ENCODE measurements at regions of chr1 and their contacts with region 1.

Region 1: GRCh38 chr1:2412519-2413233 is at the start of gene PEX10:
- DNase-seq: peak; percentile 90 to 98
- H3K4me3 ChIP-seq: peak within 1 kb of the TSS; percentile 87 to 98
- H3K27ac ChIP-seq: peak within 1 kb of the TSS; percentile 79
- H3K4me1 ChIP-seq: peaks cover 12 to 26% of the 10 kb centered on the region in 2 donors
- H3K27me3 ChIP-seq: peaks cover 6% of the 10 kb centered on the region
- CTCF ChIP-seq: no peak
- total RNA-seq, gene PEX10: 26.1 TPM

Region 2: GRCh38 chr1:2360588-2361364 is 51.9 kb before region 1 on chr1:
- intact Hi-C with region 1: no loop called
- DNase-seq: no peak
- H3K4me3 ChIP-seq: no peak overlapping the region
- H3K27ac ChIP-seq: peak overlapping the region in 1 of 2 donors; percentile 42
- H3K4me1 ChIP-seq: peaks cover 0 to 5% of the 10 kb centered on the region in 2 donors
- H3K27me3 ChIP-seq: no peaks in the 10 kb centered on the region
- CTCF ChIP-seq: no peak

Region 3: DNA sequence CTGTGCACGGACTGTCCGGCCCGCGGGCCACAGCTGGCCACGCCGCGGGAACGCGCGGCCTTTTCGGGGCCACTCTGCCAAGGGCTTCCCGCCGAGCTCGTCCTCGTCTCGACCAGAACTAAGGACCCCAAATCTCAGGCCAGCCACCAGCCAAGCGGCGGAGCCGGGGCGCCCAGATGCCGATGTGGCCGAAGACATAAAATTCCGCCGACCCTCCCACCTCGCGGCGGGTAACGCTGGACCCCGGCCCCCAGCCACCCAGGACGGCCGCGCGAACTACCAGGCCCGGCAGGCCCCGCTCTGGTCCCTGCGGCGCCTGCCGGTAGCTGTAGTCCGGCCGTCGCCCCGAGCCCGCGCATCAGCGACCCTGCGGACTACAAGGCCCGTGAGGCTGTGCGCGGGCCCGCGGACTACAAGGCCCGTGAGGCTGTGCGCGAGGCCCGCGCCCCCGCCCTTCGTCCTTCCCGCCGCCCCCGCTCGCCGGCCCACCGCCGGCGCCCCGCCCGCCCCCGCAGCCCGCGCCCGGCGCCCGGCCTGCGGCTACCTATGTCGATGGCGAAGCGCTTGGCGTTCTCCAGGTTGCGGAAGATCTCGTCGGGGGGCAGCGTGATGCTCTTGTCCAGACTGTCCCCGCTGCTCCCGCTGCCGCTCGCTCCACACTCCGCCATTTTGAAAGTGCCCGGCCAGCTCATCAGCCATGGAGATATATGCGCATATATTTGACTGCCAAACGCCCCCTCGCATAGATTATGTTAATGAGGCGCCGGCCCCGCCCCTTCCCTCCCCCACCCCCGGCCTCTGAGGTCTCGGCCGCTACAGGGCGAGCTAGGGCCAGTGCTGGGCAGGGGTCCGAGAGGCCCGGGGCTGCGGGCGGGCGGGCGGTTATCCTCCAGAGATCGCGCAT is 113.5 kb after region 1 on chr1 and contains the start of gene PANK4:
- intact Hi-C with region 1: loop called (anchors 1 kb)
- DNase-seq: peak; percentile 68 to 96
- H3K4me3 ChIP-seq: peak within 1 kb of the TSS; percentile 75 to 80
- H3K27ac ChIP-seq: peak within 1 kb of the TSS; percentile 66 to 68
- H3K4me1 ChIP-seq: peaks cover 36 to 54% of the 10 kb centered on the region in 2 donors
- H3K27me3 ChIP-seq: no peaks in the 10 kb centered on the region
- CTCF ChIP-seq: no peak
- total RNA-seq, gene PANK4: 80.5 TPM

Region 4: GRCh38 chr1:2586154-2587070 is 173.7 kb after region 1 on chr1 and contains the start of gene PRXL2B:
- intact Hi-C with region 1: loop called (anchors 1 kb)
- DNase-seq: peak; percentile 95 to 99
- H3K4me3 ChIP-seq: peak within 1 kb of the TSS; percentile 79 to 85
- H3K27ac ChIP-seq: peak within 1 kb of the TSS; percentile 91 to 94
- H3K4me1 ChIP-seq: peaks cover 13 to 14% of the 10 kb centered on the region in 2 donors
- H3K27me3 ChIP-seq: no peaks in the 10 kb centered on the region
- CTCF ChIP-seq: no peak
- total RNA-seq, gene PRXL2B: 20.1 TPM

Region 5: GRCh38 chr1:2786329-2787162 is 373.9 kb after region 1 on chr1:
- intact Hi-C with region 1: loop called (anchors 2 kb)
- DNase-seq: peak in 1 of 2 donors; percentile 67
- H3K4me3 ChIP-seq: no peak overlapping the region
- H3K27ac ChIP-seq: no peak overlapping the region
- H3K4me1 ChIP-seq: no peaks in the 10 kb centered on the region
- H3K27me3 ChIP-seq: peaks cover 9% of the 10 kb centered on the region
- CTCF ChIP-seq: peak; percentile 56 to 71 (median 62)

Region 6: DNA sequence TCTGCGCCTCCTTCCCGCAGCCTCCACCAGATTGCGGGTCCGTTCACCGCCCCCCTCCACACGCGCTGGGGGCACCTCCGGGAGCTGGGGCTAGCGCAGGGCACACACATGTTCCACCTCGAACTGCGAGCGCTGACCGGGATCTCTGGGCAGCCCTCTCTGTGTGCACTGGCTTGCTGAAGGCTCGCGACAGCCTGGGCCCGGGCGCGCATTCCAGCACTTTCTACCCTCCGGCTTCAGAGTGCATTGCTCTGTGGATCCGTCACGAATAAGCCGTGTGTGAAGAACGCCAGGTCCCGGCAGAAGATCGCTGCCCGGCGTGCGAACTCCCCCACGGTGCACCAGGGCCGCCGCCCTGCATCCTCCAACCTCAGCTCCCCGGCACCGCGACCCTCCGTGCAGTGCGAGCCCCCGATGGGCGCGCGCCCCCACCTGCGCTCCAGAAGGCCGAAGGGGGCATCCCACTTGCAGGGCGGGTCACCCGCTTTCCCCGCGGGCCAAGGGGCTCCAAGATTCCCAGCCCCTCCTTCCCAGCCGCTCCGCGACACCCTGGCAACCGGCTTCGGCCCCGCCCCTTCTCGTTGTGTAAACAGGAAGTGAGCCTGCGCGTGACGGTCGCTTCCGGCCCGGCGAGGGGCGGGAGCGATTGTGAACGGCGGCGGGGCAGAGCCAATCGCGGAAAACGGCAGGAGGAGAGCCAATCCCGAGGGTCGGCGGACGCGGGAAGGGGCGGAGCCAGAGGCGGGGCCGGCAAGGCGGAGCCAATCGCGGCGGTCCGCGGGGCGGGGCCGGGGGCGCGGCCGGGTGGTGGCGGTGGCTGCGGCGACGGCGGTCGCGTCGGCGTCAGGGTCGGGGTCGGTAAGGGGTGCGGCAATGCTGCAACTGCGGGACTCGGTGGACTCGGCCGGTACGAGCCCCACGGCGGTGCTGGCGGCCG is 1211.8 kb after region 1 on chr1 and contains the start of gene TPRG1L:
- intact Hi-C with region 1: loop called (anchors 2 kb)
- DNase-seq: peak; percentile 88 to 99
- H3K4me3 ChIP-seq: peak within 1 kb of the TSS; percentile 67 to 97
- H3K27ac ChIP-seq: peak within 1 kb of the TSS; percentile 62 to 65
- H3K4me1 ChIP-seq: peaks cover 11 to 15% of the 10 kb centered on the region in 2 donors
- H3K27me3 ChIP-seq: no peaks in the 10 kb centered on the region
- CTCF ChIP-seq: no peak
- total RNA-seq, gene TPRG1L: 18.9 TPM

Measured in ascending aorta (tissue), 2 donors.